ENCODE measurements at regions of chr17 and their contacts with region 1.

Region 1: DNA sequence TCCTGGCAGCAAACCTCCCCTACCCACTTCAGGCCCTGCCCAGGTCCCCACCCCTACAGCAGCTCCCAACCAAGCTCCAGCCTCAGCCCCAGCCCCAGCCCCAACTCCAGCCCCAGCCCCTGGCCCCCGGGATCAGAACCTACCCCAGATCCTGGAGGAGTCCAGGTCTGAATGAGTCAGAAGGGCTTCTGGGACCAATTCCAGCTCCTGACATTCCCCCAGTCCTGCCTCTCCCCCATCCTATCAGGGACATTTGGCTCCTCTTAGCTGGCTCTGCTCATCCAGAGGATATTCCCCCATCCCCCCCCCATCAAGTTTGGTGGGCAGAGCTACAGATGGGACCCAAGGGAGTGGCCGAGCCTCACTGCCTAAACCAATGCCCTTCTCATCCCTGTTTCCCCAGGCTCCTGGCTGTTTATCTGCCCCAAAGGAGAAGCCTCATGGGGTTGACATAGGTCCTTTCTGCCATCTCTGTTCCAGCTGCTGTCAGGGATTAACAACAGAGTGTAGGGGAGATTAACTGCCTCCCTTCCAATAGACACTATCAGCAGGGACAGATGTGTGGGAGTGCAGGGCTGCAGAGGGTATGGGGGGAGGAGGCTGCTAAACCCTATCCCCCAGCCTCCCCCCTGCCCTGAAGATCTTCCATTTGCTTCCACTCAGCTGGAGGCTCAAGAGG is 16.5 kb downstream of the CNTNAP1 start:
- DNase-seq: peak in 4 of 5 donors; percentile 54 to 72 (median 62)
- ATAC-seq: peak; percentile 67 to 82 (median 80)
- H3K4me3 ChIP-seq: no peak overlapping the region
- H3K27ac ChIP-seq: peak overlapping the region in 1 of 12 donors; percentile 16
- H3K4me1 ChIP-seq: peaks cover 0 to 11% (median 4%) of the 10 kb centered on the region in 12 donors
- H3K27me3 ChIP-seq: no peaks in the 10 kb centered on the region
- CTCF ChIP-seq: no peak
- POLR2A ChIP-seq: no peak

Region 2: GRCh38 chr17:42598905-42599304 is 100.0 kb before region 1 on chr17:
- intact Hi-C with region 1: no loop called
- DNase-seq: peak in 4 of 5 donors; percentile 23 to 55 (median 36)
- ATAC-seq: peak in 3 of 4 donors; percentile 76 to 80 (median 79)
- H3K4me3 ChIP-seq: no peak overlapping the region
- H3K27ac ChIP-seq: peak overlapping the region in 1 of 12 donors; percentile 15
- H3K4me1 ChIP-seq: peaks cover 0 to 17% (median 12%) of the 10 kb centered on the region in 12 donors
- H3K27me3 ChIP-seq: no peaks in the 10 kb centered on the region
- CTCF ChIP-seq: no peak
- POLR2A ChIP-seq: no peak

Region 3: DNA sequence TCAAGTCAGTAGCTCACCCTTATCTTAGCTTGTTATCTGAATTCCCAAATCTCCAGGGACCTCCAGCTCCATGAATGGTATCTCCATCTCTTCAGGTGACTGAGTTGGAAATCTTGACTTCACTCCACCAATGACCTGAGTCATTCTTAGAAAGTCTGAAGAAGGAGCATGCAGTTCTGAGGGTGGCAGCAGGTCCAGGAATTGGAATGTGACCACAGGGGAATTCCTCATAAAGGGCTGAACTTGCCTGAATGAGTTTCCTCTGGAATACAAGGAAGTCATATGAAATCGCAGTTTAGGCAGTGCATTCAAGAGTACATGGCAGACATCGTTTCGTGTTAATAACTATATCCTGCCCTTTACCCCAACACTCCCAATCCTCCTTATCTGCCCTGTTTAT is 1267.4 kb after region 1 on chr17:
- intact Hi-C with region 1: loop called in 1 of 10 experiments (anchors 10 kb)
- DNase-seq: no peak
- ATAC-seq: no peak
- H3K4me3 ChIP-seq: no peak overlapping the region
- H3K27ac ChIP-seq: no peak overlapping the region
- H3K4me1 ChIP-seq: no peaks in the 10 kb centered on the region
- H3K27me3 ChIP-seq: peaks cover 0 to 12% (median 0%) of the 10 kb centered on the region in 9 donors
- CTCF ChIP-seq: no peak
- POLR2A ChIP-seq: no peak